Sigmoid colon (tissue), 7 donors: ENCODE measurements at regions of chr14 and their contacts with region 1.

Region 1: GRCh38 chr14:105090493-105091053 is 25.3 kb upstream of the GPR132 start:
- DNase-seq: peak; percentile 87
- H3K4me3 ChIP-seq: no peak overlapping the region
- H3K27ac ChIP-seq: peak overlapping the region; percentile 87 to 96 (median 92)
- H3K4me1 ChIP-seq: peaks cover 0 to 75% (median 61%) of the 10 kb centered on the region in 4 donors
- H3K27me3 ChIP-seq: no peaks in the 10 kb centered on the region
- CTCF ChIP-seq: peak; percentile 75 to 96 (median 94)
- EP300 ChIP-seq: no peak
- POLR2A ChIP-seq: no peak

Region 2: GRCh38 chr14:104865644-104866441 is 224.7 kb before region 1 on chr14:
- intact Hi-C with region 1: no loop called
- DNase-seq: peak; percentile 85
- H3K4me3 ChIP-seq: peak overlapping the region; percentile 57 to 89 (median 71)
- H3K27ac ChIP-seq: peak overlapping the region; percentile 67 to 80 (median 75)
- H3K4me1 ChIP-seq: peaks cover 0 to 35% (median 26%) of the 10 kb centered on the region in 4 donors
- H3K27me3 ChIP-seq: peaks cover 0 to 9% (median 0%) of the 10 kb centered on the region in 3 donors
- CTCF ChIP-seq: no peak
- EP300 ChIP-seq: no peak
- POLR2A ChIP-seq: peak in 1 of 2 donors; percentile 24

Region 3: DNA sequence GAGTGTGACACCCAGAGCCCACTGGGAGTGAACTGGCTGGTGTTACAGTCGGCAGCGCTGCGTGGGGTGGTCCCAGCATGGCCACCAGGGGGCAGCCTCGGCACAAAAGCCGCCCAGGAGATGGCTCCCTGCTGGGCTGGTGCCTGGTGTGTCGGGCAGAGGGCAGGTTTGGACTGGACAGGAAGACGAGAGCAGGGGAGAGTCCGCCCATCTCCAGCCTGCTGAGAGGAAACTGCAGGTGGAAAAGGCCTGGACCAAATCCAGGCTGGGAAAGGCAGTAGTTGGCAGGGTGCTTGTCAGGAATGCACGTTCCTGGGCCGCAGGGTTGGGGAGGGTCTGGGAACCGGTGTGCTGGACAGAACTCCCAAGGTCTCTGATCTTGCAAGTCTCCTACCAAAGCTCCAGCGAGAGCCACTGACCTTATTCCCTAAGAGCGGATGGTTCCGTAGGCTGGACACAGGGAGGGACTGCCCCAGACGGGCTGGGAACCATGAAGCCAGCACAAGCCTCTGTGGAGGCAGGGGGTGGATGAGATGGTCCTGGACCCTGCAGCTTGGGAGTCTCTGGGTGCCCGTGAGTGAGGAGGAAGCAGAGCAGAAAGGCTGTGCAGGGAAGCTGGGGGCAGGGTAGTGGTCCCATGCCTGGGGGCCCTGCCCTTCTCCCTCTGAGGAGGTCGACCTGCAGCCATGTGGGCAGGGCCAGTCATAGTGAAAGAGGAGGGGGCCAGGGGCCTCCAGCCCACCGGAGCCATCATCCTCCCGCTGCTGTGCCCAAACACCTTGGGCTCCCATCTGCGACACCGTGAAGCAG is 114.2 kb before region 1 on chr14:
- intact Hi-C with region 1: loop called (anchors 5 kb)
- DNase-seq: peak; percentile 92
- H3K4me3 ChIP-seq: peak overlapping the region in 1 of 4 donors; percentile 67
- H3K27ac ChIP-seq: peak overlapping the region; percentile 90 to 97 (median 96)
- H3K4me1 ChIP-seq: peaks cover 0 to 91% (median 86%) of the 10 kb centered on the region in 4 donors
- H3K27me3 ChIP-seq: no peaks in the 10 kb centered on the region
- CTCF ChIP-seq: peak; percentile 92 to 94 (median 92)
- EP300 ChIP-seq: no peak
- POLR2A ChIP-seq: no peak

Region 4: DNA sequence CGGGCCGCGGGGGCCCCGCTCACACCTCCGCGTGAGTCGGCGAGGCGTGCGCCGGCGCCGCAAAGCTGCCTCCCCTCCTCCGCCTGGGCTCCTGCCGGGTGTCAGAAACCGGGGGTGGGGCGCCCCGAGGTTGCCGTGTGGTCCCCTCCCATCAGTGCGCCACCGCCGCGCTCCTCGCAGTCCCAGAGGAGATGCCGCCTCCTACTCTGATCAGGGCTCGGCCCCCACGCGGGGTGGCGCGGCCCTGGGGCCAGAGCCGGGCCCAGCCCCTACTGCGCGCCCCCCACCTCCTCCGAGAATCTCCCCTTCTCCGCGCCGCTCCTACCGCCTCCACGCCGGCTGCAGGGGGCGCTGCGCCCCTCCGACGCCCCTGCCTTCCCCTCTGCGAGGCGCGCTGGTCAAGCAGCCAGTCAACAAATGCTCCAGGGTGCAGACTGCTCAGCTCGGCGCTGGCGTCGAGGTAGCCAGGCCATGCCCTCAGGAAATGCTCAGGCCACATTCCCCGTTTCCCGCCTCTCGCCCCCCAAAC is 78.5 kb after region 1 on chr14:
- intact Hi-C with region 1: loop called (anchors 2 kb)
- DNase-seq: no peak
- H3K4me3 ChIP-seq: peak overlapping the region in 3 of 4 donors; percentile 35 to 41 (median 41)
- H3K27ac ChIP-seq: no peak overlapping the region
- H3K4me1 ChIP-seq: peaks cover 0 to 20% (median 17%) of the 10 kb centered on the region in 4 donors
- H3K27me3 ChIP-seq: peaks cover 4 to 62% (median 37%) of the 10 kb centered on the region in 3 donors
- CTCF ChIP-seq: peak in 1 of 4 experiments; percentile 30
- EP300 ChIP-seq: no peak
- POLR2A ChIP-seq: no peak

Region 5: GRCh38 chr14:105300792-105301533 is 210.4 kb after region 1 on chr14 and contains the start of gene BRF1:
- intact Hi-C with region 1: loop called (anchors 5 kb)
- DNase-seq: peak; percentile 99
- H3K4me3 ChIP-seq: peak within 1 kb of the TSS; percentile 64 to 88 (median 70)
- H3K27ac ChIP-seq: peak within 1 kb of the TSS; percentile 95 to 98 (median 98)
- H3K4me1 ChIP-seq: peaks cover 0 to 27% (median 21%) of the 10 kb centered on the region in 4 donors
- H3K27me3 ChIP-seq: no peaks in the 10 kb centered on the region
- CTCF ChIP-seq: no peak
- EP300 ChIP-seq: no peak
- POLR2A ChIP-seq: peak; percentile 15 to 40
- total RNA-seq, gene BRF1: 19.3 to 39.2 (median 28.5) TPM

Region 6: GRCh38 chr14:105314287-105315200 is 224.0 kb after region 1 on chr14 and contains the start of gene PACS2:
- intact Hi-C with region 1: no loop called
- DNase-seq: peak; percentile 88
- H3K4me3 ChIP-seq: peak within 1 kb of the TSS; percentile 63 to 95 (median 88)
- H3K27ac ChIP-seq: peak within 1 kb of the TSS; percentile 91 to 98 (median 94)
- H3K4me1 ChIP-seq: peaks cover 0 to 45% (median 40%) of the 10 kb centered on the region in 4 donors
- H3K27me3 ChIP-seq: no peaks in the 10 kb centered on the region
- CTCF ChIP-seq: no peak
- EP300 ChIP-seq: no peak
- POLR2A ChIP-seq: no peak
- total RNA-seq, gene PACS2: 38.7 to 90.6 (median 47.4) TPM

Region 7: DNA sequence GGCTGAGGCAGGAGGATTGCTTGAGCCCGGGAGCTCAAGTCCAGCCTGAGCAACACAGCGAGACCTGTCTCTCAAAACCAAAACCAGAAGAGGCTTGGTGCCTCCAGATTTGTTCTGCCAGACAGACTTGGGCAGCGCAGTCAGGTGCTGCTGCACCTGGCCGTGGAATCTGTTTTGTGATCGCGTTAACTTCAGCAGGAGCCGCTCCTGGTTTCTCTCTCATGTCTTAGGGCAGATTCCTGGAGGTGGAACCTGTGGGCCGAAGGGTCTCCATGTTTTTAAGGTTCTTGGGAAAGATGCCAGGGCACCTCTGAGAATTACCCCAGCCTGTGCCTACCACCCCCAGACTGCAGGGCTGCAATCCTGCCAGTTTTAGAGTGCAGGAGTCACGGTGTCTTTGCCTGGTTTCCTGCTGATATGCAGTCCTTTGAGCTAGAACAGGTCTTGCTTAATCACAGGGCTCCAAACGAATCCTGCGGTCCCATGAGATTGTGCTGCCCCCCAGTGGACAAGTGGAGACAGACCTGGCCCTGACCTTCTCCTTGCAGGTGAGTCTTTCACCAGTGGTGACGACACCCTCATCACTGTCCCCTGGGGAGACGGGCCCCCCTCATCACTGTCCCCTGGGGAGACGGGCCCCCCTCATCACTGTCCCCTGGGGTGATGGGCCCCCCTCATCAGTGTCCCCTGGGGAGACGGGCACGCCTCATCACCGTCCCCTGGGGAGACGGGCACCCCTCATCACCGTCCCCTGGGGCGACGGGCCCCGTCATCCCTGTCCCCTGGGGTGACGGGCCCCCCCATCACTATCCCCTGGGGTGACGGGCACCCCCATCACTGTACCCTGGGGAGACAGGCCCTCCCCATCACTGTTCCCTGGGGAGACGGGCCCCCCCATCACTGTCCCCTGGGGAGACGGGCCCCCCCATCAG is 261.6 kb after region 1 on chr14:
- intact Hi-C with region 1: loop called (anchors 5 kb)
- DNase-seq: peak; percentile 90
- H3K4me3 ChIP-seq: no peak overlapping the region
- H3K27ac ChIP-seq: peak overlapping the region in 1 of 4 donors; percentile 3
- H3K4me1 ChIP-seq: peaks cover 0 to 10% (median 4%) of the 10 kb centered on the region in 4 donors
- H3K27me3 ChIP-seq: no peaks in the 10 kb centered on the region
- CTCF ChIP-seq: peak; percentile 68 to 90 (median 84)
- EP300 ChIP-seq: no peak
- POLR2A ChIP-seq: no peak